CD14-positive monocyte (primary cell): ENCODE measurements at regions of chr6 and their contacts with region 1.

Region 1: DNA sequence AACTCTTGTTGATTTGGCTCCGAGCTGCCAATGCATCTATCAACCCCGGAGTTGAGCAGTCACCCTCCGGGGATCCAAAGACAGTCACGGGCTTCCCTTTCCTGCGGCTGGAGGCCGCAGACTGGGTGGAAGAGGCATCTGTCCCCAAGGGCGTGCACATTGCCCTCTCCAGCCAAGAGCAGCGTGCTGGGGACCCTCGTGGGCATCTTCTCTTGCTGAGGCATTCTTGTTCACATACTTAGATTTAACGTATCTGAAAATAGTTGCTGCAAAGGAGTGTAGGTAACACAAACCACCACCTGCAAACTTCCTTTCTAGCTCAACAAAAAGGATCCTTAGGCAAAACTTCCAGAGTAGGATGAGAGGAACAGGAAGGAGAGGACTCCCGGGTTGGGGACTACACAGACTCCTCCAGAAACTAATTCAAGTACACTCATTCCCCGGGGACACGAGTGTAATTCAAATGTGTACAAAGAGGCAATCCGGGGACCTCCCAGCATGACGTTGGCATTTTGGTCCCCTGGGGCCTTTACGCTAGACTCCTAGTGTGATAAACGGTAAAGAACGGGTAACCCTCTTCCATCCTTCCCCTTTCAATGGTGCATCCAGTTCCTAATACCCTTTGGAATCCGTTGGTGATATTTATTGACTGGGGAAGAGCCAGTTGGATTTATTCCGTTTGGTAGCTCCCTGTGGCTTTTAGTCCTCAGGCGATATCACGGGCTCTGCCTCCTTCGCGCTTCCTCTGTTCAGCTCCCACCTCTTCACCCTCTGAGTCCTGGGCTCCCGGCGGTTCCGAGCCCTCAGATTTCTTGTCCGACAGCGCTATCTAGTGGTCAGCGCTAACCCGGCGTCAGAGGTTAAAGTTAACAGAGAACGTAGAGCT is 2.7 kb upstream of the COL12A1 start:
- DNase-seq: peak; percentile 65 to 72 (median 65)
- H3K4me3 ChIP-seq: peak overlapping the region in 1 of 3 experiments; percentile 41
- H3K4me3 Mint-ChIP-seq: peak overlapping the region; percentile 60 to 87
- H3K27ac ChIP-seq: no peak overlapping the region
- H3K27ac Mint-ChIP-seq: no peak overlapping the region
- H3K4me1 ChIP-seq: peaks cover 32 to 44% of the 10 kb centered on the region in 2 donors
- H3K4me1 Mint-ChIP-seq: peaks cover 53% of the 10 kb centered on the region
- H3K27me3 ChIP-seq: peaks cover 49 to 62% of the 10 kb centered on the region in 2 donors
- H3K27me3 Mint-ChIP-seq: peaks cover 57 to 68% (median 66%) of the 10 kb centered on the region in 3 donors
- CTCF ChIP-seq: peak; percentile 86

Region 2: GRCh38 chr6:73739096-73739495 is 1469.4 kb before region 1 on chr6:
- intact Hi-C with region 1: loop called (anchors 2 kb)
- DNase-seq: peak; percentile 38 to 67 (median 56)
- H3K4me3 ChIP-seq: no peak overlapping the region
- H3K4me3 Mint-ChIP-seq: no peak overlapping the region
- H3K27ac ChIP-seq: no peak overlapping the region
- H3K27ac Mint-ChIP-seq: no peak overlapping the region
- H3K4me1 ChIP-seq: no peaks in the 10 kb centered on the region
- H3K4me1 Mint-ChIP-seq: no peaks in the 10 kb centered on the region
- H3K27me3 ChIP-seq: no peaks in the 10 kb centered on the region
- H3K27me3 Mint-ChIP-seq: peaks cover 0 to 2% (median 0%) of the 10 kb centered on the region in 3 donors
- CTCF ChIP-seq: peak; percentile 82

Region 3: DNA sequence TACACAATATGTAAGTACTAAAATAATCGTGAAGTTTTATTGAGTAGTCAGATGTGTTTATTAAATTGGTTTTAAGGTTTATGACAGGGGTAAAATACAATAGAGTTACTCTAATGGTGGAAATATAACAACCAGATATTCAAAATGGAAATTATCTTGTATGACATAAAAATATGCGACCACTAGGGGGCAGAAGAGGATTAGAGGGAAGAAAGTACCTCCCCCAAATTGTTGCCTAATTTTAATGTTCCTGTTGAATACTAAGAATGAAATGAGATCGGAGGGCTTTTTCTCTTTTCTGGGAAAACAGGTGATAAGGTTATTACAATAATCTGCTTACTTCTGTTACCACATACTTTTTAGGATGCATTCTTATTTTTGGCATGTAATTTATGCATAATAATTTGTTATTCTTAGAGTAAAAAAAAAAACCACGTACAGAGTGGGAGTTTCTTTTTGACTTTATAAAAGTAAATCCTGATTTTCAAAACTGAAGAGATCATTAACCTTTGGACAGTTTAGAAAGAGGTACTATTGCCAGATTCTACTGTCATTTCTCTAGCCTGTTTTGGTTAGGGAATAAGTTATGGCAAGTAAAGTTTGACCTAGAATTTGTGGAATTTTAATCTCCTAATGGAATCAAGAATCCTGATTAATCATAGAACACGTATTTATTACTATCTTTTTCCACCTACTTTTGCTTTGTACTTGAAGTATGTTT is 1353.4 kb before region 1 on chr6:
- intact Hi-C with region 1: loop called in 1 of 2 experiments (anchors 10 kb)
- DNase-seq: peak; percentile 51 to 67 (median 60)
- H3K4me3 ChIP-seq: peak overlapping the region in 1 of 3 experiments; percentile 47
- H3K4me3 Mint-ChIP-seq: peak overlapping the region in 1 of 2 donors; percentile 35
- H3K27ac ChIP-seq: no peak overlapping the region
- H3K27ac Mint-ChIP-seq: no peak overlapping the region
- H3K4me1 ChIP-seq: no peaks in the 10 kb centered on the region
- H3K4me1 Mint-ChIP-seq: no peaks in the 10 kb centered on the region
- H3K27me3 ChIP-seq: no peaks in the 10 kb centered on the region
- H3K27me3 Mint-ChIP-seq: peaks cover 0 to 2% (median under 1%) of the 10 kb centered on the region in 3 donors
- CTCF ChIP-seq: peak; percentile 83

Region 4: GRCh38 chr6:74798302-74798701 is 410.2 kb before region 1 on chr6:
- intact Hi-C with region 1: no loop called
- DNase-seq: no peak
- H3K4me3 ChIP-seq: no peak overlapping the region
- H3K4me3 Mint-ChIP-seq: no peak overlapping the region
- H3K27ac ChIP-seq: no peak overlapping the region
- H3K27ac Mint-ChIP-seq: no peak overlapping the region
- H3K4me1 ChIP-seq: no peaks in the 10 kb centered on the region
- H3K4me1 Mint-ChIP-seq: no peaks in the 10 kb centered on the region
- H3K27me3 ChIP-seq: no peaks in the 10 kb centered on the region
- H3K27me3 Mint-ChIP-seq: no peaks in the 10 kb centered on the region
- CTCF ChIP-seq: no peak

Region 5: DNA sequence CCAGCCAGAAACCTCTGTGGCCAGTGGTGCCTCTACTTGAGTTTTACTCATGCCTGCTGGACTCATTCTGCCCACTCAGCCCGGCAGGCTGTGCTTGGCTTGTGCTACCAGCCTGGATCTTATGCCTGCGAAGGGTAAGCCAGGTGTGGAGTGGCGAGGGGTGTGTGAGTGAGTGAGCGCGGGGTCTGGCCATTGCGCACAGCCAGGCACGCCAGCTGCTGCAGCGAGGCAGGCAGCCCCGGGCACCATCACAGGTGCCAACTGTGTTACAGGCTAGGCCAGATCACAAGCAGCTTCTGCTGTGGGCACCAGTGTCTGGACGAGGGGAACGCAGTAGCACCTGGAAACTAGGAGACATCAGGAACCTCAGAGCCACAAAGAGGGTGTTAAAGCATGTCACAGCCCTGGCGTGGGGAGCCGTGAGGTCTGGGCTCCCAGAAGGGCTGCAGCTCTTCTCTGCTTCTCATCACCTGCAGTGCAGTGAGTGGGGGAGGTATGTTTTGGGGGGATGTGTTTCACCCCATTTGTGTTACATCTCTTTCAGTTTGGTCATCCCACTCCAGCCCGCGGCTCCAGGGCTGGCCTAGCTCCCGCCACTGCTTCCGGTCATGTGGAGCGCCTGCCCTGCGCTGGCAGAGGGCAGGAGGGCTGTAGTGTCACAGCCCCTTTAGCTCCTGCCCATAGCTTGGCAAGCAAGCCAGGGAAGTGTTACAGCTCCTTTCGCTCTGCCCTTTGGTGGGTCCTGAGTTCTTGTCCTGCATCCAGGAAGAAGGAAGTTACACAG is 1243.6 kb after region 1 on chr6:
- intact Hi-C with region 1: no loop called
- DNase-seq: no peak
- H3K4me3 ChIP-seq: no peak overlapping the region
- H3K4me3 Mint-ChIP-seq: no peak overlapping the region
- H3K27ac ChIP-seq: no peak overlapping the region
- H3K27ac Mint-ChIP-seq: no peak overlapping the region
- H3K4me1 ChIP-seq: no peaks in the 10 kb centered on the region
- H3K4me1 Mint-ChIP-seq: no peaks in the 10 kb centered on the region
- H3K27me3 ChIP-seq: no peaks in the 10 kb centered on the region
- H3K27me3 Mint-ChIP-seq: no peaks in the 10 kb centered on the region
- CTCF ChIP-seq: no peak